WTC11 (cell line): ENCODE measurements at regions of chr6 and their contacts with region 1.

Region 1: DNA sequence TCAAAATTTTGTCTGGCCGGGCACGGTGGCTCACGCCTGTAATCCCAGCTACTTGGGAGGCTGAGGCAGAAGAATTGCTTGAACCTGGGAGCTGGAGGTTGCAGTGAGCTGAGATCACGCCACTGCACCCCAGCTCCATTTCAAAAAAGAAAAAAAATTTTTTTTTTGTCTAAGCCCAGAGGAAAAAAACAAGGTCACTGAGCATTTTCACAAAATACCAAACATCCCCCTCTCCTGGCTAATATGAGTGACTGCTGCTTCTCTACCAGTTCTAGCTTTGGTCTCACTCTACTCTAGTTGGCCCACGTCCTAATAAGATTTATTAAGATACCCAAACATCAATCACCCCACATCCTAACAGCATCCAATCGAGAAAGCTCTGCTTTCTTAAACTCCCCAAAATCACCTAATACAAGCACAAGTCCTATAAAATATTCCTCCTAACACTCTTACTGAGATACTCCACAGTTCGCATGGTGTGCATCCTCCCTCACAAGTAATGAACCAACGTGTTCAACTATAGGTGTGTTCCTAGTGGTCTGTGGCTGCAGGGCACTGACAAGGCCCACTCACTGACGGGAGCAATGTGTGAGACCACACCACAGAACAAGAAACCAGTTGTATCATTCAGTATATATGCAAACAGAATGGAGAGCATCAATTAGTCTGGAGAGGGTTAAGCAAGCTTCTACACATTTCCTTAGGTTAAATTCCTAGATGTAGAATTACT is 64.2 kb downstream of the FKBP5 start:
- DNase-seq: no peak
- ATAC-seq: peak; percentile 30; the same call in 1 of the 2 replicates
- H3K4me3 Mint-ChIP-seq: no peak overlapping the region
- H3K27ac Mint-ChIP-seq: peak overlapping the region; percentile 81
- H3K4me1 Mint-ChIP-seq: no peaks in the 10 kb centered on the region
- H3K27me3 Mint-ChIP-seq: no peaks in the 10 kb centered on the region
- CTCF ChIP-seq: no peak

Region 2: GRCh38 chr6:35583893-35584688 is 40.4 kb before region 1 on chr6:
- CTCF ChIA-PET with region 1: interaction called, 17 read pairs
- POLR2A ChIA-PET with region 1: no interaction called
- DNase-seq: peak; percentile 75
- ATAC-seq: peak; percentile 86
- H3K4me3 Mint-ChIP-seq: no peak overlapping the region
- H3K27ac Mint-ChIP-seq: no peak overlapping the region
- H3K4me1 Mint-ChIP-seq: peaks cover 4% of the 10 kb centered on the region; the same call in 1 of the 2 replicates
- H3K27me3 Mint-ChIP-seq: no peaks in the 10 kb centered on the region
- CTCF ChIP-seq: peak; percentile 73

Region 3: GRCh38 chr6:35590622-35591066 is 33.9 kb before region 1 on chr6:
- CTCF ChIA-PET with region 1: interaction called, 17 read pairs
- POLR2A ChIA-PET with region 1: interaction called, 4 read pairs
- DNase-seq: no peak
- ATAC-seq: no peak
- H3K4me3 Mint-ChIP-seq: no peak overlapping the region
- H3K27ac Mint-ChIP-seq: peak overlapping the region; percentile 58; the same call in 1 of the 2 replicates
- H3K4me1 Mint-ChIP-seq: peaks cover 5% of the 10 kb centered on the region; the same call in 1 of the 2 replicates
- H3K27me3 Mint-ChIP-seq: no peaks in the 10 kb centered on the region
- CTCF ChIP-seq: no peak

Region 4: GRCh38 chr6:35601331-35602132 is 23.0 kb before region 1 on chr6:
- CTCF ChIA-PET with region 1: interaction called, 17 read pairs
- POLR2A ChIA-PET with region 1: no interaction called
- DNase-seq: no peak
- ATAC-seq: peak; percentile 78
- H3K4me3 Mint-ChIP-seq: no peak overlapping the region
- H3K27ac Mint-ChIP-seq: peak overlapping the region; percentile 78
- H3K4me1 Mint-ChIP-seq: peaks cover 28% of the 10 kb centered on the region
- H3K27me3 Mint-ChIP-seq: no peaks in the 10 kb centered on the region
- CTCF ChIP-seq: no peak

Region 5: GRCh38 chr6:35786810-35787209 is 162.3 kb after region 1 on chr6:
- CTCF ChIA-PET with region 1: no interaction called
- POLR2A ChIA-PET with region 1: no interaction called
- DNase-seq: no peak
- ATAC-seq: no peak
- H3K4me3 Mint-ChIP-seq: no peak overlapping the region
- H3K27ac Mint-ChIP-seq: no peak overlapping the region
- H3K4me1 Mint-ChIP-seq: peaks cover 18% of the 10 kb centered on the region
- H3K27me3 Mint-ChIP-seq: no peaks in the 10 kb centered on the region
- CTCF ChIP-seq: no peak